Aorta (tissue), 5 donors: ENCODE measurements at regions of chr5 and their contacts with region 1.

Region 1: DNA sequence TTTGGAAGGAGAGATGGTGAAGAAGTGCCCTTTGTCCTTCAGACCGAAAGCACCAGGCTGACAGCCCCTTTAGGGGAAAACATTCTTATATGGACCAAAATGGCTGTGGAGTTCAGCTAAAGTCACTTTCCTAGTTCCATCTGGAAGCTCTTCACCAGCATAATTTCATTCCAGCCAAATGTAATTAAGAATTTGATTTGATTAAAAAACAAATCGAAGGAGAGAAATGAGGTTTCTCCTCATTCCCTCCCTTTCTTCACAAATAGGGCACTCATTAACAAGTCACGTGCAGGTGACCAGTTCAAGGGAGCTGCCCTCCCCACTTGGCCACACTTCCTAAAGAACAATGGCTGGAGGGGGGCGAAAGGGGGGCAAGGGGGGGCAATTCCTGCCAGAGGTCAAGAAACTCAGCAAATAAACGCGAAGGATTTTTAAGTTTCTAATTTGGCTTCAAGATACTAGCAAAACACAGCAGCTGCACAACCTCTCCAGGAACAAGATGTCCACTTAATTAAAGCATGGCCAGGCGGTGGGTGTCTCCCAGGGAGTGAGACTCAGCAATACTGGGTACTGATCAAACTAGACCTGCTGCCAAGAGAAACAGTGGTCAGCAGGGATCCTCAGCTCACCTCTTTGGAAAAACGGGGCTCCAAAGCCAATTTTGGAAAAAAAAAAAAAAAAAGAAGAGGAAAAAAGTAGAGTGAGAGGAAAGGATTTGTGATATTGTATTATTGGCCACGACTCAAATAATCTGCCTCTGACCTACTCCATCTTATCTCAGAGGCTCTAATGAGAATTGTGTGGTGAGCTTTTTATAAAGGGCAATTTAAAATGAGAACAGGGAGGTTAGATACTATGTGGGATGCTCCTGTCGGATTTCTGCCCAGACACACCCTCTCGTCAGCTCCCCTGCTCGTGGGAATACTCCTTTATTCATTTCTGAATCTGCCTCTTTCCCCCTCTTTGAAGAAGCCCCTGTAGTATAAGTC is 254.3 kb downstream of the ZSWIM6 start:
- DNase-seq: no peak
- ATAC-seq: peak; percentile 68
- H3K4me3 ChIP-seq: no peak overlapping the region
- H3K27ac ChIP-seq: no peak overlapping the region
- H3K4me1 ChIP-seq: no peaks in the 10 kb centered on the region
- H3K27me3 ChIP-seq: no peaks in the 10 kb centered on the region

Region 2: GRCh38 chr5:61641747-61642578 is 55.6 kb after region 1 on chr5:
- intact Hi-C with region 1: no loop called
- DNase-seq: no peak
- ATAC-seq: no peak
- H3K4me3 ChIP-seq: no peak overlapping the region
- H3K27ac ChIP-seq: no peak overlapping the region
- H3K4me1 ChIP-seq: no peaks in the 10 kb centered on the region
- H3K27me3 ChIP-seq: no peaks in the 10 kb centered on the region

Region 3: GRCh38 chr5:61744690-61745594 is 158.6 kb after region 1 on chr5:
- intact Hi-C with region 1: loop called in 1 of 2 experiments (anchors 10 kb)
- DNase-seq: no peak
- ATAC-seq: no peak
- H3K4me3 ChIP-seq: no peak overlapping the region
- H3K27ac ChIP-seq: no peak overlapping the region
- H3K4me1 ChIP-seq: no peaks in the 10 kb centered on the region
- H3K27me3 ChIP-seq: no peaks in the 10 kb centered on the region